Naive thymus-derived CD4-positive, alpha-beta T cell (primary cell): ENCODE measurements at regions of chr17 and their contacts with region 1.

Region 1: DNA sequence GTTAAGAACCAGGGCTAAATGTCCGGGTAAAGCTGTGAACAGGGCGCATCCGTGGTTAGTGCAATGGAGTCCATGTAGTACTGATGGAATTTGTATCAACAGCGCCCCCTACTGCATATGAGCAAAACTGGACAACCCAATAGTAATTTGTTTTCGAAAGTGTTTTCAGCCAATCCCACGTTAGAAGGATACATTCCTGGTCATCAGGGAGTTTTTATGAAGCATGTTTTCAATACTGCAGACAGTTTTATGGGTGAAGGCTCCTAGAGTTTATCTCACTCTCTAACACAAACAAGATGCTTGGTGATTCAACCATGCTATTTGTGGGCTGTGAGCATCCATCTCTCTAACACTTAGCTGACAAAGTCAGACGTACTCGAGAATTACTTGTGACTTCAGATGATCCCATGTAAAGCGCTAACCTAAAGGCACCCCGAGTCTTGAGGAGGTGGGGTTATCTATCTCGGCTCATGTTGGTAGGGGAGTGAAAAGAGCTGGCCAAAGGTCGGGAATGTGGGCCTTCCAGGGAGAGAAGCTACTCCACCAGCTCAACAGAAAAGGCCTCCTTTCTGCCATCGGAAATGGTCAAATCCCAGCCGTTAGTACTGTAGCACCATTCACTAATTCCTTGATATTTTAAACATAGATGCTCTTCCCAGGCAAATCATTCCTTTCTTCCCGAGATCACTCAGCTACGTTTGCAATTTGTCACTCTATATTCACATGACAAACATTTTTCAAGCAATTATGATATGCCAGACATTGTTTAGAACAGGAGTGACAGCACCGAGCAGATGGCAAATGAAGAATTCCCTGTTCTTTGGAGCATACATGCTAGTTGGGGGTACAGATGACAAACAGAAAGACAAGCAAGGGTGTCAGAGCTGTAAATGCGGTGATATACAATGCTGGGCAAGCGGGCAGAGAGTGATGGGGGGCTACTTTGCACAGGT is 46.9 kb upstream of the HNF1B start:
- DNase-seq: peak in 7 of 9 donors; percentile 19 to 39 (median 22)
- ATAC-seq: peak; percentile 64
- H3K4me3 ChIP-seq: no peak overlapping the region
- H3K4me3 Mint-ChIP-seq: no peak overlapping the region
- H3K27ac ChIP-seq: no peak overlapping the region
- H3K27ac Mint-ChIP-seq: no peak overlapping the region
- H3K4me1 ChIP-seq: no peaks in the 10 kb centered on the region
- H3K4me1 Mint-ChIP-seq: peaks cover 0 to 6% (median 0%) of the 10 kb centered on the region in 7 donors
- H3K27me3 ChIP-seq: no peaks in the 10 kb centered on the region
- H3K27me3 Mint-ChIP-seq: peaks cover 12 to 29% (median 21%) of the 10 kb centered on the region in 5 donors

Region 2: DNA sequence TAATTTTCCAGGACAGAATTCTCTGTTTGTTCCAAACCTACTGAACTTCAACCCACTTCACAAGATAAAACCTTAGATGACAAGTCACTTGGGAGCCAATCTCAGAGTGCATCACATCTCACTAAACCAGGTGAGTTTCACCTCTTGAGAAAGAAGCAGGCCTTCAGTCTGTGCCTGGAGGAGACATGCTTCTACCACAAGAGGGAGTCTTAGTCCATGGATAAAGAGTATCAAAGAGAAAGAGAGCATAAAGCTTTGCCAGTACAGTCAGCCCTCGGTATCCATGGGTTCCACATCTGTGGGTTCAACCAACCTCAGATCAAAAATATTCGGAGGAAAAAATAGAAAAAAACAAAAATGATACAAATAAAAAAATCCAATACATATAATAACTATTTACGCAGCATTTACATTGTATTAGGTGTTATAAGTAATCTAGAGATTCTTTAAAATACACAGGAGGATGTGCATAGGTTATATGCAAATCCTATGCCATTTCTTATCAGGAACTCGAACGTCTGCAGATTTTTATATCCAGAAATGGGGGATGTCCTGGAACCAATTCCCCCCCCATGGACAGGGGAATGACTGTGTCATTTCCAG is 264.4 kb before region 1 on chr17:
- CTCF ChIA-PET with region 1: no interaction called
- POLR2A ChIA-PET with region 1: no interaction called
- intact Hi-C with region 1: loop called in 1 of 2 experiments (anchors 2 kb)
- DNase-seq: peak in 7 of 9 donors; percentile 13 to 59 (median 49)
- ATAC-seq: peak; percentile 74
- H3K4me3 ChIP-seq: no peak overlapping the region
- H3K4me3 Mint-ChIP-seq: no peak overlapping the region
- H3K27ac ChIP-seq: no peak overlapping the region
- H3K27ac Mint-ChIP-seq: peak overlapping the region in 6 of 9 donors; percentile 12 to 52 (median 38)
- H3K4me1 ChIP-seq: no peaks in the 10 kb centered on the region
- H3K4me1 Mint-ChIP-seq: peaks cover 7 to 25% (median 15%) of the 10 kb centered on the region in 7 donors
- H3K27me3 ChIP-seq: no peaks in the 10 kb centered on the region
- H3K27me3 Mint-ChIP-seq: no peaks in the 10 kb centered on the region

Region 3: GRCh38 chr17:37643118-37643766 is 148.5 kb before region 1 on chr17 and contains the start of gene DDX52:
- CTCF ChIA-PET with region 1: no interaction called
- POLR2A ChIA-PET with region 1: no interaction called
- intact Hi-C with region 1: loop called in 1 of 2 experiments (anchors 5 kb)
- DNase-seq: peak; percentile 75 to 88 (median 84)
- ATAC-seq: peak; percentile 99
- H3K4me3 ChIP-seq: peak within 1 kb of the TSS; percentile 89
- H3K4me3 Mint-ChIP-seq: peak within 1 kb of the TSS; percentile 89 to 98 (median 94)
- H3K27ac ChIP-seq: peak within 1 kb of the TSS; percentile 85
- H3K27ac Mint-ChIP-seq: peak within 1 kb of the TSS; percentile 63 to 97 (median 93)
- H3K4me1 ChIP-seq: peaks cover 8 to 10% of the 10 kb centered on the region in 2 donors
- H3K4me1 Mint-ChIP-seq: peaks cover 24 to 58% (median 39%) of the 10 kb centered on the region in 7 donors
- H3K27me3 ChIP-seq: peaks cover 0 to 9% of the 10 kb centered on the region in 2 donors
- H3K27me3 Mint-ChIP-seq: peaks cover 20 to 43% (median 30%) of the 10 kb centered on the region in 5 donors
- total RNA-seq, gene DDX52: 20.8 to 34.0 (median 29.3) TPM

Region 4: GRCh38 chr17:37744961-37745800 is 46.5 kb before region 1 on chr17 and contains the start of gene HNF1B:
- CTCF ChIA-PET with region 1: no interaction called
- POLR2A ChIA-PET with region 1: no interaction called
- intact Hi-C with region 1: loop called in 1 of 2 experiments (anchors 5 kb)
- DNase-seq: peak in 1 of 9 donors; percentile 37
- ATAC-seq: peak; percentile 65
- H3K4me3 ChIP-seq: no peak within 1 kb of the TSS
- H3K4me3 Mint-ChIP-seq: peak within 1 kb of the TSS; percentile 23 to 85 (median 58)
- H3K27ac ChIP-seq: no peak within 1 kb of the TSS
- H3K27ac Mint-ChIP-seq: peak within 1 kb of the TSS in 1 of 9 donors; percentile 75
- H3K4me1 ChIP-seq: peaks cover 8 to 25% of the 10 kb centered on the region in 2 donors
- H3K4me1 Mint-ChIP-seq: peaks cover 14 to 34% (median 24%) of the 10 kb centered on the region in 7 donors
- H3K27me3 ChIP-seq: peaks cover 8 to 24% of the 10 kb centered on the region in 2 donors
- H3K27me3 Mint-ChIP-seq: peaks cover 55 to 84% (median 61%) of the 10 kb centered on the region in 5 donors
- total RNA-seq, gene HNF1B: 1.4 TPM in 1 of 5 experiments, not detected in the others